PC-9 (cell line): ENCODE measurements at regions of chr9 and their contacts with region 1.

Region 1: DNA sequence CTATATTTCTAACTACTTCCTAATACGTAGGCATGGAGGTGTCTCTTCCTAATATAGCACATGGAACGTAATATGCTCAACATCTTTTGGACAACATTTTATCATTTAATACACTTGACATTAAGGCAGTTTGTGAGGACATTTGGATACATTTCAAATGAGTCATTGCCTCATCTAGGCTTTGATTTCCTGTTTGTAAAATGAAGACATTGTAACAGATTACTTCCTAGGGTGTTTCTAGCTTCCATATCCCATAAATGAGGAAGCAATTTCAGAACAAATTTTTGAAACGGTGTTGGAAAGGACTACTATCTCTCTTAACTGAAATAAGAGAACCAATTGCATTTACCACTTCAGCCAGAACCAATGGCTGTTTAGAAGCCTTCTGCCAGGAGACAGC is 38.7 kb downstream of the SLC28A3 start:
- DNase-seq: no peak
- H3K4me3 ChIP-seq: no peak overlapping the region
- H3K27ac ChIP-seq: no peak overlapping the region
- H3K4me1 ChIP-seq: no peaks in the 10 kb centered on the region
- H3K27me3 ChIP-seq: no peaks in the 10 kb centered on the region
- CTCF ChIP-seq: no peak

Region 2: GRCh38 chr9:86052556-86053468 is 1751.0 kb after region 1 on chr9:
- CTCF ChIA-PET with region 1: no interaction called
- POLR2A ChIA-PET with region 1: interaction called, 16 read pairs
- intact Hi-C with region 1: no loop called
- DNase-seq: no peak
- H3K4me3 ChIP-seq: no peak overlapping the region
- H3K27ac ChIP-seq: no peak overlapping the region
- H3K4me1 ChIP-seq: no peaks in the 10 kb centered on the region
- H3K27me3 ChIP-seq: no peaks in the 10 kb centered on the region
- CTCF ChIP-seq: no peak